ENCODE measurements at regions of chr17 and their contacts with region 1.

Region 1: DNA sequence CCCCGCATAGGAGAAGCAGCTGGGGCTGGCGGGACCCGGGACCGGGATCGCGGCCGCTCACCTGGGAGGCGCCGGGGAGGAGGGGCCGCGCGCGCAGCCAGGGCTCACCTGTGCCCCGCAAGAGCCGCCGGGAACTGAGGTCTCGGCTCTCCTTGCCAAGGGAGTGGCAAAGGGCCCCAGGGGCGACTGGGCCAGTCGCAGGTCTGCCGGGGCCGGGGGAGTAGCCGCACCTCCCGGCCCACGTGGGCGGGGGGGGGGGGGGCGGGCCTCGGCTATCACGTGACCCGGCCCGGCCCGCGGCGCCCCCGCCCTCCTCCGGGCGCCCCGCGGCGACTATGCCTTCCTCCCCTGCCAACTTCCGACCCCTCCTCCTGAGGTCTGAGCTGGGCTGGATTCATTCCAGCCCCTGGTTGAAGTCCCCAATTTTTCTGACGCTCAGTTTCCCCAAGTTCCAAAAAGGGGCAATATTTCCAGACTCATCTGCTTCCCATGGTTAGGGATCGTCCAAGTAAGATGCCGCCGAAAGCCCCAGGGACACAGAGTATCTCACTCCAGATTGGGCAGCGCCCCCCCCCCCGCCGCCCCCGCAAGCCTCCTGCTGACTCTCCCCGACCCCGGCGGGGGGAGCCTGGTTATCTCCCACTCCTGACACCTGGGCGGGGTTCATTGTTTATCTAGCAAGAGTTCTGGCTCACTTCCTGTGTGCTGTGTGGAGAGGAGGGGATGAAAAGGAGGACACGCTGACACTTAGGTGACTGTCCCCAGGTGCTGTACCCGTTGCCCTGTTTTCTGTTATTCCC is at the start of gene TMC6:
- DNase-seq: peak; percentile 67 to 87 (median 80)
- H3K4me3 ChIP-seq: peak within 1 kb of the TSS; percentile 96
- H3K4me3 Mint-ChIP-seq: peak within 1 kb of the TSS; percentile 93 to 100 (median 99)
- H3K27ac ChIP-seq: peak within 1 kb of the TSS; percentile 87
- H3K27ac Mint-ChIP-seq: peak within 1 kb of the TSS; percentile 96 to 99 (median 98)
- H3K4me1 ChIP-seq: peaks cover 64% of the 10 kb centered on the region
- H3K4me1 Mint-ChIP-seq: peaks cover 42 to 72% (median 43%) of the 10 kb centered on the region in 3 donors
- H3K27me3 ChIP-seq: no peaks in the 10 kb centered on the region
- H3K27me3 Mint-ChIP-seq: peaks cover 0 to 3% of the 10 kb centered on the region in 2 donors
- total RNA-seq, gene TMC6: 150 TPM

Region 2: GRCh38 chr17:78092794-78093324 is 35.9 kb before region 1 on chr17:
- CTCF ChIA-PET with region 1: no interaction called
- POLR2A ChIA-PET with region 1: no interaction called
- DNase-seq: no peak
- H3K4me3 ChIP-seq: no peak overlapping the region
- H3K4me3 Mint-ChIP-seq: no peak overlapping the region
- H3K27ac ChIP-seq: no peak overlapping the region
- H3K27ac Mint-ChIP-seq: no peak overlapping the region
- H3K4me1 ChIP-seq: no peaks in the 10 kb centered on the region
- H3K4me1 Mint-ChIP-seq: no peaks in the 10 kb centered on the region
- H3K27me3 ChIP-seq: no peaks in the 10 kb centered on the region
- H3K27me3 Mint-ChIP-seq: no peaks in the 10 kb centered on the region

Region 3: DNA sequence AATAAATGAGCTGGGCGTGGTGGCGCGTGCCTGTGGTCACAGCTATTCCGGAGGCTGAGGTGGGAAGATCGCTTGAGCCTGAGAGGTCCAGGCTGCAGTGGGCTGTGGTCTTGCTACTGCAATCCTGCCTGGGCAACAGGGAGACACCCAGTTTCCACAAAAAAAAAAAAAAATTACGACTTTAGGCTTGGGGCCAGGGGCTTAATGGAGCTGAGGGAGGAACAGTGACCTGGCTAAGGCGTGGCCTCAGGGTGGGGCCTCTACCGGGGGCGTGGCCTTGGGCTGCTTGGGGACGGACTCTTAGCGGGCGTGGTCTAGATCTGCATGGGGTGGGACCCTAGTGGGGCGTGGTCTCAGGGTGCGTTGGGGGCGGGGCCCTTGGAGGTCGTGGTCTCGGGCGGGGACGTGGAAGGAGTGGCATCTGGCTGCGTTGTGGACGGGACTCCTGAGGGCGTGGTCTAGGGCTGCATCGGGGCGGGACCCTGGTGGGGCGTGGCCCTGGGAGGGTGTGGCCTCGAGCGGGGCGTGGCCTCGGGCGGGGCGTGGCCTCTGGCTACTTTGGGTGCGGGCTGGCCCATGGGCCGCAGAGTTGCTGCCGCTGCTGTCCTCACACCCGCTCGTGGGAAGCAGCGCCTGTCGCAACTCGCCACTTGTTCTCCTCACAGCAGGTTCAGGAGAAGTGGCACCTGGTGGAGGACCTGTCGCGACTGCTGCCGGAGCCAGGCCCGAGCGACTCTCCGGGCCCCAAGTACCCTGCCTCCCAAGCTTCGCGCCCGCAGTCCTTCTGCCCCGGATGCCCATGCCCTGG is 11.6 kb after region 1 on chr17:
- CTCF ChIA-PET with region 1: interaction called, 75 read pairs
- POLR2A ChIA-PET with region 1: interaction called, 333 read pairs
- DNase-seq: peak; percentile 92 to 95 (median 94)
- H3K4me3 ChIP-seq: peak overlapping the region; percentile 12
- H3K4me3 Mint-ChIP-seq: peak overlapping the region; percentile 32 to 82 (median 64)
- H3K27ac ChIP-seq: peak overlapping the region; percentile 54
- H3K27ac Mint-ChIP-seq: peak overlapping the region; percentile 87 to 95 (median 92)
- H3K4me1 ChIP-seq: peaks cover 76% of the 10 kb centered on the region
- H3K4me1 Mint-ChIP-seq: peaks cover 47 to 85% (median 59%) of the 10 kb centered on the region in 3 donors
- H3K27me3 ChIP-seq: no peaks in the 10 kb centered on the region
- H3K27me3 Mint-ChIP-seq: no peaks in the 10 kb centered on the region

Region 4: GRCh38 chr17:78168242-78168902 is 39.6 kb after region 1 on chr17 and contains the start of gene SYNGR2:
- CTCF ChIA-PET with region 1: interaction called, 4 read pairs
- POLR2A ChIA-PET with region 1: interaction called, 13 read pairs
- DNase-seq: peak; percentile 80 to 89 (median 84)
- H3K4me3 ChIP-seq: peak within 1 kb of the TSS; percentile 49
- H3K4me3 Mint-ChIP-seq: peak within 1 kb of the TSS; percentile 64 to 86 (median 70)
- H3K27ac ChIP-seq: peak within 1 kb of the TSS; percentile 70
- H3K27ac Mint-ChIP-seq: peak within 1 kb of the TSS in 7 of 8 donors; percentile 35 to 89 (median 77)
- H3K4me1 ChIP-seq: peaks cover 26% of the 10 kb centered on the region
- H3K4me1 Mint-ChIP-seq: peaks cover 22 to 42% (median 26%) of the 10 kb centered on the region in 3 donors
- H3K27me3 ChIP-seq: no peaks in the 10 kb centered on the region
- H3K27me3 Mint-ChIP-seq: no peaks in the 10 kb centered on the region
- total RNA-seq, gene SYNGR2: 186 to 200 TPM

Measured in CD8-positive, alpha-beta memory T cell (primary cell).